CD4-positive, alpha-beta T cell (primary cell): ENCODE measurements at regions of chr9 and their contacts with region 1.

Region 1: DNA sequence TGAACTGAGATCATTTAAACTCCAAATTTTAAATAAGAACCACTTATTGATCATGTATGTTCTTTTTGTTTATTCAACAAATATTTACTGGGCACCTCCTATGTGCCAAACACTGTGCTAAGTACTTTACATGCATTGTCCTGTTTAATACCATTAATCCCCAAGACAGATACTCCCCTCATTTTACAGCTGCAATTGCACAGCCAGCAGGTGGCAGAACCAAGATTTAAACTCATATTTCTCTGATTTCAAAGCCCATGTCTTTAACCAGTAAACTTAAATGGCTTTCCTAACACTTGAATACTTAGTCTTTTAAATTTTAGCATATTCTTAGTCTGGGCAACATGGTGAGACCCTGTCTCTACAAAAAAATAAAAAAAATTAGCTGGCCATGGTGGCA is 43.4 kb upstream of the KIAA1958 start:
- DNase-seq: peak in 13 of 14 experiments; percentile 1 to 59 (median 14)
- ATAC-seq: peak; percentile 43
- H3K4me3 ChIP-seq: no peak overlapping the region
- H3K4me3 Mint-ChIP-seq: no peak overlapping the region
- H3K27ac ChIP-seq: no peak overlapping the region
- H3K27ac Mint-ChIP-seq: no peak overlapping the region
- H3K4me1 ChIP-seq: no peaks in the 10 kb centered on the region
- H3K4me1 Mint-ChIP-seq: no peaks in the 10 kb centered on the region
- H3K27me3 ChIP-seq: no peaks in the 10 kb centered on the region
- H3K27me3 Mint-ChIP-seq: no peaks in the 10 kb centered on the region
- CTCF ChIP-seq: peak; percentile 47

Region 2: DNA sequence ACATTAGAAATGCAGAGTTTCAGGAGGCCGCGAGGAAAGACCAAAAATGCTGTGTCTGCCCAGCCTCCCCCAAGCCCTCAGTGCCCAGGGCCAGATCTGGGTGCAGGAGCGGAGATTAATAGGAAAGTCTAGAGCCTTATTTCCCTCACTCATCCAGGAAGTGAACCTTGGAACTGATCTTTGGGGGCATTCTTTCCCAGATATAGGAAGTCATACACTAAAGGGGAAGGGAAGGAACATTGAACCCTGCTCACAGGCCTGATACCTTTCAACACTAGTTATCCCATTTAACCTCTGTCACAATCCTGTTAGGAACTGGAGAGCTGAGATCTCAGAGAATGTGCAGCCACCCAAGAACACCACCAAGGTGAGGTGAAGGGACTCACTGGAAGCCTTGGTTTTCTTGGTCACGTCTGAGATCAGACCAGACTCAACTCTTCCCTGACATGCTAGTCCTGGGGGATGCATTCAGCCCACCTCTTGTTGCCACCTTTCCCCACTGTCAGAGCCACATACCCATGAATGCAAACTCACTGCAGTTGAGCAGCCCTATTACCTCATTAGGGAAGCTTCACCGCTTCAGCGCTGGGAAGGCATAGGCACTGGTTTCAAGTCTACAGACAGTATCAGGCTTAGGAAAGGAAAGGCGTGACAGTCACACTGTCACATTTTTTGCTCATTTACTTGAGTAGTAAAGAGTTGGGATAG is 138.4 kb after region 1 on chr9:
- CTCF ChIA-PET with region 1: no interaction called
- POLR2A ChIA-PET with region 1: no interaction called
- intact Hi-C with region 1: no loop called
- DNase-seq: no peak
- ATAC-seq: no peak
- H3K4me3 ChIP-seq: no peak overlapping the region
- H3K4me3 Mint-ChIP-seq: no peak overlapping the region
- H3K27ac ChIP-seq: no peak overlapping the region
- H3K27ac Mint-ChIP-seq: no peak overlapping the region
- H3K4me1 ChIP-seq: no peaks in the 10 kb centered on the region
- H3K4me1 Mint-ChIP-seq: no peaks in the 10 kb centered on the region
- H3K27me3 ChIP-seq: no peaks in the 10 kb centered on the region
- H3K27me3 Mint-ChIP-seq: no peaks in the 10 kb centered on the region
- CTCF ChIP-seq: no peak

Region 3: DNA sequence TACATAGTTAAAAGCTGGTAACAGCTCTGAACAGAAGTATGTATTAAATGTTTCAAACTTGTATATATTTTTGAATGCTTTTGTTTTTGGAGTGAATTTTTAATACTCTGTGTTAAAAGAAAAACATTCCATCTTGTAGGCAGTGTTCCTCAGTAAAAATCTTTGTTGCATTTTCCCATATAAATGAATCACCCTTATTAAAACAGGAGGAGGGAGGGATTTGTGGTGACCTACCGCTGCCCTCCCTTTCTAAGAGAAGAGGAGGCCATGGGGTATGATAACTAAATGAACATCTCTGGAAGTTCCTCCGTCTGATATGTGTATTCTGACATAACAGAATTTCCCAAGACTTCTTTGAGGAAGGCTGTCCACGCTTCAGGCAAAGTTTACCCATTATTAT is 221.3 kb after region 1 on chr9:
- CTCF ChIA-PET with region 1: no interaction called
- POLR2A ChIA-PET with region 1: no interaction called
- intact Hi-C with region 1: loop called in 1 of 2 experiments (anchors 5 kb)
- DNase-seq: no peak
- ATAC-seq: no peak
- H3K4me3 ChIP-seq: no peak overlapping the region
- H3K4me3 Mint-ChIP-seq: no peak overlapping the region
- H3K27ac ChIP-seq: no peak overlapping the region
- H3K27ac Mint-ChIP-seq: no peak overlapping the region
- H3K4me1 ChIP-seq: no peaks in the 10 kb centered on the region
- H3K4me1 Mint-ChIP-seq: no peaks in the 10 kb centered on the region
- H3K27me3 ChIP-seq: no peaks in the 10 kb centered on the region
- H3K27me3 Mint-ChIP-seq: no peaks in the 10 kb centered on the region
- CTCF ChIP-seq: no peak